K562 (cell line): ENCODE measurements at regions of chr4 and their contacts with region 1.

Region 1: GRCh38 chr4:8468746-8469535 is 28.4 kb downstream of the TRMT44 start:
- DNase-seq: peak; percentile 72 to 78 (median 76)
- ATAC-seq: peak; percentile 93
- H3K4me3 ChIP-seq: no peak overlapping the region
- H3K27ac ChIP-seq: no peak overlapping the region; the same call in 2 of the 3 replicates
- H3K4me1 ChIP-seq: peaks cover 0 to 35% of the 10 kb centered on the region in 2 experiments; a peak in 4 of 5 replicates
- H3K27me3 ChIP-seq: no peaks in the 10 kb centered on the region
- CTCF ChIP-seq: peak; percentile 93 to 95 (median 94)
- EP300 ChIP-seq: no peak
- POLR2A ChIP-seq: no peak
- RAD21 ChIP-seq: peak; percentile 94 to 98

Region 2: GRCh38 chr4:8362483-8362882 is 106.5 kb before region 1 on chr4:
- CTCF ChIA-PET with region 1: no interaction called
- POLR2A ChIA-PET with region 1: no interaction called
- in situ Hi-C with region 1: no loop called
- intact Hi-C with region 1: no loop called
- DNase-seq: no peak
- ATAC-seq: no peak
- H3K4me3 ChIP-seq: no peak overlapping the region
- H3K27ac ChIP-seq: no peak overlapping the region
- H3K4me1 ChIP-seq: no peaks in the 10 kb centered on the region
- H3K27me3 ChIP-seq: peaks cover 7 to 27% of the 10 kb centered on the region in 2 experiments; a peak in 4 of 5 replicates
- CTCF ChIP-seq: no peak
- EP300 ChIP-seq: no peak
- POLR2A ChIP-seq: no peak
- RAD21 ChIP-seq: no peak

Region 3: DNA sequence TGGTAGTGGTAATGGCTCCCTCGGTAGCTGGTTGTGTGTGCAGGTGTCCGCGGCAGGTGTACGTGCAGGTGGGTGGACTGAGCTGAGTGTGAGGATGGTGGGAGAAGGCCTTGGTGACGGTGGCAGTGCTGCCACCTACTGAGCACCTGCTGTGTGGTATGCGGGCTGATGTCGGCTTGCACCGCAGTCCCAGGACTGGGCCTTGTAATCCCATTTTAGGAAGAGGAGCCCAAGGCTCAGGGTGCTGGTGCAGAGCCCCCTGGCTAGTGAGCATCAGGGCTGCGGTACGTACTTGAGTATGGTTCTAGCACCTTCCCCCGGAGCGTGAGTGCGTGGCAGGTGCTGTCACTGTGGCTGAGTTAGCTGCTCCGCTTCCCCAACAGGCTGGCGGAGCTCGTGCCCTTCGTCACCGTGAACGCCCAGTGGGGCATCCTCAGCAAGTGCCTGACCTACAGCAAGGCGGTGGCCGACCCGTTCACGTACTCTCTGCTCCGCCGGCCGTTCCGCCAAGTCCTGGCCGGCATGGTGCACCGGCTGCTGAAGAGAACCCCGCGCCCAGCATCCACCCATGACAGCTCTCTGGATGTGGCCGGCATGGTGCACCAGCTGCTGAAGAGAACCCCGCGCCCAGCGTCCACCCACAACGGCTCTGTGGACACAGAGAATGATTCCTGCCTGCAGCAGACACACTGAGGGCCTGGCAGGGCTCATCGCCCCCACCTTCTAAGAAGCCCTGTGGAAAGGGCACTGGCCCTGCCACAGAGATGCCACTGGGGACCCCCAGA is 117.9 kb after region 1 on chr4:
- CTCF ChIA-PET with region 1: interaction called, 64 read pairs
- POLR2A ChIA-PET with region 1: no interaction called
- in situ Hi-C with region 1: no loop called
- intact Hi-C with region 1: loop called (anchors 2 kb)
- DNase-seq: peak in 2 of 4 experiments; percentile 19 to 20
- ATAC-seq: peak; percentile 68
- H3K4me3 ChIP-seq: no peak overlapping the region
- H3K27ac ChIP-seq: no peak overlapping the region
- H3K4me1 ChIP-seq: peaks cover 0 to 13% of the 10 kb centered on the region in 2 experiments; a peak in 3 of 5 replicates
- H3K27me3 ChIP-seq: peaks cover 3 to 63% of the 10 kb centered on the region in 2 experiments; a peak in 3 of 5 replicates
- CTCF ChIP-seq: peak; percentile 8 to 38 (median 21); a peak in 1 of 6 replicates
- EP300 ChIP-seq: no peak
- POLR2A ChIP-seq: no peak
- RAD21 ChIP-seq: peak in 1 of 2 experiments; percentile 40; a peak in 1 of 4 replicates

Region 4: GRCh38 chr4:8594097-8595038 is 125.4 kb after region 1 on chr4:
- CTCF ChIA-PET with region 1: interaction called, 64 read pairs
- POLR2A ChIA-PET with region 1: interaction called, 6 read pairs
- in situ Hi-C with region 1: loop called (anchors 5 kb)
- intact Hi-C with region 1: loop called (anchors 1 kb)
- DNase-seq: peak; percentile 84 to 94 (median 92)
- ATAC-seq: peak; percentile 87
- H3K4me3 ChIP-seq: no peak overlapping the region
- H3K27ac ChIP-seq: no peak overlapping the region
- H3K4me1 ChIP-seq: peaks cover 13 to 38% of the 10 kb centered on the region in 2 experiments; a peak in 4 of 5 replicates
- H3K27me3 ChIP-seq: peaks cover 7 to 21% of the 10 kb centered on the region in 2 experiments; a peak in 3 of 5 replicates
- CTCF ChIP-seq: peak; percentile 78 to 94 (median 81)
- EP300 ChIP-seq: no peak
- POLR2A ChIP-seq: no peak
- RAD21 ChIP-seq: peak; percentile 91 to 95

Region 5: DNA sequence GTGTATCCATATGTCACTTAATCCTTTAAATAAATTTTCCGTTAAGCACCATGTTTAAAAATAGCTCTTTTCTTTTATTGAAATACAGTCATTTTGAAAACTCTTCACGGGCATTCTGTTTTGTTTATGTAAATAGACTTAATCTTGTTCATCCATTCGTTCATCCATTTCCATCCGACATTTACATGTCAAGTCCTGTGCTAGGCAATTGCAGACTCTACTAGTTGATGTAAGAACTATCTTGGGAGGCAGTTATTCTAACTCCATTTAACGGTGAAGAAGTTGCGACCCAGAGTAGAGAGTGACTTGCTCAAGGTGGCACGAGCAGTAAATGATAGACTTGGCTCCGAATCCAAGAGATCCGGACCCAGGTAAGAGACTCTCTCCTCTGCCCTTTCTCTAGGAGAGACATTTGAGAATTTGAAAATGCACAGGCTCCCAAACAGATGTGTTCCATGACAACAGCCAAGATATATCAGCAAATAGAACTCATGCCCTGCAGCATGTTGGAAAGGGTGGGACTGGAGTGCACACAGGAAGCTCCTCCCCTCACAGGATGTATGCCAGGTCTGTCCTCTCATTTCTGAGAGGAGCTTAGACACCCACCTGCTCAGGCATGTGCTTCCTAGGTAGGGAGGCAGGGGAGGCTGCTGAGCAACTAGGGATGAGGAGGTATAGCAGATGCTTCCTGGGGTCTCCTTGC is 1377.0 kb after region 1 on chr4:
- CTCF ChIA-PET with region 1: no interaction called
- POLR2A ChIA-PET with region 1: no interaction called
- in situ Hi-C with region 1: no loop called
- intact Hi-C with region 1: no loop called
- DNase-seq: no peak
- ATAC-seq: no peak
- H3K4me3 ChIP-seq: no peak overlapping the region
- H3K27ac ChIP-seq: no peak overlapping the region
- H3K4me1 ChIP-seq: no peaks in the 10 kb centered on the region
- H3K27me3 ChIP-seq: peaks cover 0 to 4% of the 10 kb centered on the region in 2 experiments; a peak in 2 of 5 replicates
- CTCF ChIP-seq: no peak
- EP300 ChIP-seq: no peak
- POLR2A ChIP-seq: no peak
- RAD21 ChIP-seq: no peak